ENCODE measurements at regions of chr11 and their contacts with region 1.

Region 1: DNA sequence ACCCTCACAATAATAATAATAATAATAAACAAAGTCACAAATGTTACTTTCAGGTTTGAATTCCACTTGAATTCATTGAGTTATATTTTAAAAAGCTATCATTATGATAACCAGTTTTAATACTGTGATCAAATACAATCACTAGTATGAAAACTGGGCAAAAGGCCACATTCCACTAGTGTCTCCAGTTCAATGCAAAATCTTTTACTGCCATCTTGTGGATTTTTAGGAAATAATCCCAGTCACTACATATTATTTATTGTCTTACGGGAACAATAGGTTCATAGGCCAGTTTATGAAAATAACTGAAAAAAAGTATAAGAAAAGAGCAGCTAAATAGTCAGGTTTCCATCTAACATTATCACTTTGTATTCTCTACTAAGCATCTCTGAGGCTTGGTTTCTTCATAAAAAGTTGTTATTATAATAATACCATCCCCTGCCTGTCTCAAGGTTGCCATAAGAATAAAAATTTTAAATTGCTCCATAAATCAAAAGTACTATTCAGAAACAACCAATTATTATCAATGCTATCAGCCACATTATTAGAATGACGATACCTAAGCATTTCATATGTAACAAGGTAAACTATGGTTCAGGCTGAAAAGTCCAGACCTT is 533.9 kb upstream of the CCDC90B start:
- DNase-seq: no peak
- ATAC-seq: peak in 1 of 4 donors; percentile 72
- H3K4me3 ChIP-seq: no peak overlapping the region
- H3K27ac ChIP-seq: no peak overlapping the region
- H3K4me1 ChIP-seq: no peaks in the 10 kb centered on the region
- H3K27me3 ChIP-seq: no peaks in the 10 kb centered on the region
- CTCF ChIP-seq: peak; percentile 61

Region 2: GRCh38 chr11:82718307-82718706 is 1101.7 kb before region 1 on chr11:
- intact Hi-C with region 1: loop called (anchors 5 to 10 kb)
- DNase-seq: no peak
- ATAC-seq: peak in 3 of 4 donors; percentile 50 to 83 (median 56)
- H3K4me3 ChIP-seq: no peak overlapping the region
- H3K27ac ChIP-seq: no peak overlapping the region
- H3K4me1 ChIP-seq: no peaks in the 10 kb centered on the region
- H3K27me3 ChIP-seq: no peaks in the 10 kb centered on the region
- CTCF ChIP-seq: peak; percentile 71

Region 3: GRCh38 chr11:83235825-83236224 is 584.2 kb before region 1 on chr11:
- intact Hi-C with region 1: loop called in 1 of 2 experiments (anchors 5 kb)
- DNase-seq: no peak
- ATAC-seq: no peak
- H3K4me3 ChIP-seq: no peak overlapping the region
- H3K27ac ChIP-seq: no peak overlapping the region
- H3K4me1 ChIP-seq: peaks cover 3% of the 10 kb centered on the region
- H3K27me3 ChIP-seq: no peaks in the 10 kb centered on the region
- CTCF ChIP-seq: no peak

Region 4: DNA sequence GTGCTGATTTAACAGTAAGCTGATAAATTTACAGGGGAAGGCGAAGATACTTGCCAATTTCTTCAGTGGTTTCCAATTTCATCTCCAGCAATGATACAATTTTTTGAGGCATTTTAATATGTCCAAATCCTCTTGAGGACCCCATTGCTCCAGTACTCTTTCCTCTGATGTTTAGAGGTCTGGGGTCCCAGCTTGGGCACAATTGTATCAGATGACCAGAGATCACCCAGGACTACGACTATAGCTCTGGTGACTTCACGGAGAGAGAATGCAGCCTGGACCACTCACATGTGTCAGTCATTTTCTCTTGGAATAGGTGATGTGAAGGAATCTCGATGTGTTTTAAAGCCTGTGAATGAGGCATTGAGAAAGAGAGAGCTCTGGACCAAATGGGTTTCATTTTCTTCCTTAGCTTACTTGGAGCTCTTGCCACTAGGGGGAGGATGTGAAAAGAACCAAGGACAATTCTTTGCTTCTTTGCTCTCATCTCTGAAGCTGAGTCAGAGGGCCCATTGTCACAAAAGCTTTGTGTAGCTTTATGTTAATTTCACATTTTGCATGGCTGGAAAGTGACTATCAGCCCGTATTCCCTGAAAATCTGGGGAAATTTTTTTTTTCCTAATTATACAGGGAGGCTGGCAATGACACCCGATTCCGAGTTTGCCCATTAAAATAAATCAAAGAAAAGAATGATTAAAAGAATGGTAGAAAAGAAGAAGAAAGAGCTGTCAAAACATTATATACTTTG is 527.2 kb before region 1 on chr11:
- intact Hi-C with region 1: loop called (anchors 2 to 5 kb)
- DNase-seq: no peak
- ATAC-seq: peak in 3 of 4 donors; percentile 54 to 83 (median 65)
- H3K4me3 ChIP-seq: peak overlapping the region; percentile 28
- H3K27ac ChIP-seq: no peak overlapping the region
- H3K4me1 ChIP-seq: no peaks in the 10 kb centered on the region
- H3K27me3 ChIP-seq: no peaks in the 10 kb centered on the region
- CTCF ChIP-seq: peak; percentile 55